Vagina (tissue), 2 donors: ENCODE measurements at regions of chr21 and their contacts with region 1.

Region 1: GRCh38 chr21:26850108-26850643 is 5.0 kb upstream of the ADAMTS1 start:
- DNase-seq: no peak
- H3K4me3 ChIP-seq: no peak overlapping the region
- H3K27ac ChIP-seq: no peak overlapping the region
- H3K4me1 ChIP-seq: peaks cover 4% of the 10 kb centered on the region
- H3K27me3 ChIP-seq: no peaks in the 10 kb centered on the region
- CTCF ChIP-seq: peak; percentile 91 to 94 (median 94)
- POLR2A ChIP-seq: no peak

Region 2: GRCh38 chr21:26572702-26573381 is 277.3 kb before region 1 on chr21 and contains the start of gene CYYR1:
- intact Hi-C with region 1: no loop called
- DNase-seq: no peak
- H3K4me3 ChIP-seq: peak within 1 kb of the TSS; percentile 41 to 50
- H3K27ac ChIP-seq: peak within 1 kb of the TSS; percentile 83
- H3K4me1 ChIP-seq: no peaks in the 10 kb centered on the region
- H3K27me3 ChIP-seq: no peaks in the 10 kb centered on the region
- CTCF ChIP-seq: no peak
- POLR2A ChIP-seq: no peak
- total RNA-seq, gene CYYR1: 12.3 TPM

Region 3: GRCh38 chr21:26909972-26910371 is 59.8 kb after region 1 on chr21:
- intact Hi-C with region 1: no loop called
- DNase-seq: no peak
- H3K4me3 ChIP-seq: no peak overlapping the region
- H3K27ac ChIP-seq: no peak overlapping the region
- H3K4me1 ChIP-seq: no peaks in the 10 kb centered on the region
- H3K27me3 ChIP-seq: no peaks in the 10 kb centered on the region
- CTCF ChIP-seq: no peak
- POLR2A ChIP-seq: no peak

Region 4: GRCh38 chr21:27060190-27060589 is 210.0 kb after region 1 on chr21:
- intact Hi-C with region 1: no loop called
- DNase-seq: no peak
- H3K4me3 ChIP-seq: no peak overlapping the region
- H3K27ac ChIP-seq: no peak overlapping the region
- H3K4me1 ChIP-seq: no peaks in the 10 kb centered on the region
- H3K27me3 ChIP-seq: no peaks in the 10 kb centered on the region
- CTCF ChIP-seq: no peak
- POLR2A ChIP-seq: no peak

Region 5: GRCh38 chr21:27564684-27565301 is 714.6 kb after region 1 on chr21:
- intact Hi-C with region 1: loop called (anchors 10 kb)
- DNase-seq: no peak
- H3K4me3 ChIP-seq: no peak overlapping the region
- H3K27ac ChIP-seq: no peak overlapping the region
- H3K4me1 ChIP-seq: no peaks in the 10 kb centered on the region
- H3K27me3 ChIP-seq: no peaks in the 10 kb centered on the region
- CTCF ChIP-seq: peak; percentile 26 to 52 (median 49)
- POLR2A ChIP-seq: no peak

Region 6: DNA sequence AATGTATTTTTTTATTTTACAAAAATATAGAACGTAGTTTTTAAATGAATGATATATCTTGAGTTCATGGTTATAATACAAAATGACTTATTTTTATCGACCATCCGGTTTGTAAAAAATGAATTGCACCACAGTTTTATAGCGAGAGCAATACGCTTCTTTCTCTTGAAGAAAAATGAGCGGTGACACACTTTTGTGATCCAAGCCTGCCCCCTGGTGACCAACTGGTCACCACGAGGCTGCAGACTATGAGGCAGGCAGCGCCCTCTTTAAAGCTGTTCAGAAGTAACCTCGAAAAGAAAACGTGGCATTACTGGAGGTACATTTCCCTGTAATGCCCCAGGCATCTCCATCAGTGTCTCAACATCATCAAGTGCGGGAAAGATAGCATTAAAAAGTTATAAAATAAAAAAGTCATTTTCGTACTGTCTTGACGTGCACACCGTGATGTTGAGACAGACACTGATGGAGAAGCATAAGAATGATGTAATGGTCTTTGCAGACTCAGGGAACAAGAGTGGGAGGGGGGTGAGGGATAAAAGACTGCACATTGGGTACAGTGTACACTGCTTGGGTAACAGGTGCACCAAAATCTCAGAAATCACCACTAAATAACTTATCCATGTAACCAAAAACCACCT is 850.9 kb after region 1 on chr21:
- intact Hi-C with region 1: loop called (anchors 5 kb)
- DNase-seq: no peak
- H3K4me3 ChIP-seq: no peak overlapping the region
- H3K27ac ChIP-seq: no peak overlapping the region
- H3K4me1 ChIP-seq: no peaks in the 10 kb centered on the region
- H3K27me3 ChIP-seq: no peaks in the 10 kb centered on the region
- CTCF ChIP-seq: peak; percentile 75 to 89 (median 85)
- POLR2A ChIP-seq: no peak